ENCODE measurements at regions of chr6 and their contacts with region 1.

Region 1: GRCh38 chr6:126112144-126112632 is 125.8 kb downstream of the TRMT11 start:
- DNase-seq: no peak

Region 2: DNA sequence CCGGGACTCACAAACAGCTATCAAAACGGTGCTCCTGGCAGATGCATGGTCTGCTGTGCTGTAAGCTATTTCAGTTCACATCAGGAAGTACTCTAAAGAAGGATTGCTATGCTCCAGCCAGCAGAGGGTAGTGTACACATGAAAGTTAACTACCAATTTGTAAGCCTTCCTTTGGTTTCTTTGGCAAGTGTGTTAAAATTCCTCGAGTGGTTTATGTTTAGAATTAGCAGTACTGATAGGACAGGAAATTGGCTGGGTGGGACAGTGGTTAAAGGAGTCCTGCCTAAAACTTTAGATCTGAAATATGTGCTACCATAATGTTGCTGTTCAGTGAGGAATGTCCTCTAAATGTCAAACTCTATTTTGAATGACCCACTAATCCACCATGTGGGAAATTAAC is 78.5 kb before region 1 on chr6:
- intact Hi-C with region 1: loop called in 1 of 2 experiments (anchors 10 kb)
- DNase-seq: no peak

Region 3: GRCh38 chr6:126063512-126064146 is 48.6 kb before region 1 on chr6:
- intact Hi-C with region 1: loop called in 1 of 2 experiments (anchors 10 kb)
- DNase-seq: no peak